Natural killer cell (primary cell): ENCODE measurements at regions of chr2 and their contacts with region 1.

Region 1: DNA sequence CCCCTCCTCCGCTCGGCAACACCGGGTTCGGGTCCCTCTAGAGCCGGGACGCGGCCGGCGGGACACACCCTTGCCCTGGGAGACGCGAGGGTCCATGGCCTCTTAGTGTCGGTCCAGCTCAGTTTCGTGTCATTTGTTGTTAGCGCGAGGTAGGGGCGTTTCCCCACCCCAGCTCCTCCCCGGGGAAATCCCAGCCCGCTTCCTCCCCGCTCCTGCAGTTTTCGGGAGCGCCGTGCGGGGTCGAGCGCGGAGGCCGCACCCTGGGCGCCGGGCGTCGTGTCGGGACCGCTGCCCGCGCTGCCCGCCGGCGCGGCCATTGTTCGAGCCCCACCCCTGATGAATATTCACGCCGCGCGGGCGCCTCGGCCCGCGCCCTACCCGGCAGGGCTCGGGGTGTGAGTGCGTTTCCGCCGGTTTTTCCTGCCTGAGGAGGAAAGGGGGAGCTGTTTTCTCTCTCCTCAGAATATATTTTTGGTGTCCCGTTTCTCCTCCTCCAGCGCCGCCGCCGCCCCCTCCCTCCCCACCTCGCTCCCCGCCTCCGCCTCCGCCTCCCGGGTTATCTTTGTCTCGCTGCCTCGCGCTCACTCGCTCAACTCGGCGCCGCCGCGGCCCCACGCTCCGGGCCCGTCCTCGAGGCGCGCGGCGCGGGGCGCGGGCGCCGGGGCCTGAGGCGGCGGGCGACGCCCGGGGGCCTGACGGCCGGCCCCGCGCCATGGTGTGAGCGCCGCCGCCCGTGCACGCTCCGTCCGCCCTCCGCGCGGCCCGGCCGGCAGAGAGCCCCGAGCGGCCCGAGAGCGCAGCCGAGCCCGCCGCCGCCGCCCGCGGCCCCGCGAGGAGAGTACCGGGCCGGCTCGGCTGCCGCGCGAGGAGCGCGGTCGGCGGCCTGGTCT is at the start of gene MAP4K4:
- DNase-seq: peak; percentile 47 to 86
- ATAC-seq: peak; percentile 60 to 77 (median 68)
- H3K4me3 ChIP-seq: peak within 1 kb of the TSS; percentile 63
- H3K4me3 Mint-ChIP-seq: peak within 1 kb of the TSS; percentile 96
- H3K27ac ChIP-seq: peak within 1 kb of the TSS; percentile 51
- H3K27ac Mint-ChIP-seq: peak within 1 kb of the TSS; percentile 71 to 80
- H3K4me1 ChIP-seq: peaks cover 22% of the 10 kb centered on the region
- H3K4me1 Mint-ChIP-seq: peaks cover 17 to 19% of the 10 kb centered on the region in 2 donors
- H3K27me3 ChIP-seq: no peaks in the 10 kb centered on the region
- H3K27me3 Mint-ChIP-seq: no peaks in the 10 kb centered on the region
- CTCF ChIP-seq: no peak
- total RNA-seq, gene MAP4K4: 60.2 to 80.3 (median 66.5) TPM

Region 2: GRCh38 chr2:101823347-101823791 is 126.0 kb after region 1 on chr2:
- intact Hi-C with region 1: loop called (anchors 5 kb)
- DNase-seq: peak; percentile 44 to 86
- ATAC-seq: peak; percentile 84 to 94 (median 90)
- H3K4me3 ChIP-seq: no peak overlapping the region
- H3K4me3 Mint-ChIP-seq: no peak overlapping the region
- H3K27ac ChIP-seq: no peak overlapping the region
- H3K27ac Mint-ChIP-seq: peak overlapping the region; percentile 33 to 37
- H3K4me1 ChIP-seq: peaks cover 10% of the 10 kb centered on the region
- H3K4me1 Mint-ChIP-seq: peaks cover 48 to 51% of the 10 kb centered on the region in 2 donors
- H3K27me3 ChIP-seq: no peaks in the 10 kb centered on the region
- H3K27me3 Mint-ChIP-seq: no peaks in the 10 kb centered on the region
- CTCF ChIP-seq: peak; percentile 74